AG04450 (cell line): ENCODE measurements at regions of chr13 and their contacts with region 1.

Region 1: GRCh38 chr13:26494571-26495195 is 62.8 kb upstream of the WASF3 start:
- DNase-seq: no peak
- H3K4me3 ChIP-seq: no peak overlapping the region
- H3K27ac ChIP-seq: no peak overlapping the region
- H3K27me3 ChIP-seq: peaks cover 14% of the 10 kb centered on the region
- CTCF ChIP-seq: no peak

Region 2: GRCh38 chr13:26221721-26222519 is 272.8 kb before region 1 on chr13 and contains the start of gene RNF6:
- CTCF ChIA-PET with region 1: interaction called, 10 read pairs
- POLR2A ChIA-PET with region 1: no interaction called
- DNase-seq: peak; percentile 98
- H3K4me3 ChIP-seq: peak within 1 kb of the TSS; percentile 86
- H3K27ac ChIP-seq: peak within 1 kb of the TSS; percentile 98
- H3K27me3 ChIP-seq: no peaks in the 10 kb centered on the region
- CTCF ChIP-seq: no peak
- polyA plus RNA-seq, gene RNF6: 30.5 and 42.5 TPM in 2 replicates

Region 3: DNA sequence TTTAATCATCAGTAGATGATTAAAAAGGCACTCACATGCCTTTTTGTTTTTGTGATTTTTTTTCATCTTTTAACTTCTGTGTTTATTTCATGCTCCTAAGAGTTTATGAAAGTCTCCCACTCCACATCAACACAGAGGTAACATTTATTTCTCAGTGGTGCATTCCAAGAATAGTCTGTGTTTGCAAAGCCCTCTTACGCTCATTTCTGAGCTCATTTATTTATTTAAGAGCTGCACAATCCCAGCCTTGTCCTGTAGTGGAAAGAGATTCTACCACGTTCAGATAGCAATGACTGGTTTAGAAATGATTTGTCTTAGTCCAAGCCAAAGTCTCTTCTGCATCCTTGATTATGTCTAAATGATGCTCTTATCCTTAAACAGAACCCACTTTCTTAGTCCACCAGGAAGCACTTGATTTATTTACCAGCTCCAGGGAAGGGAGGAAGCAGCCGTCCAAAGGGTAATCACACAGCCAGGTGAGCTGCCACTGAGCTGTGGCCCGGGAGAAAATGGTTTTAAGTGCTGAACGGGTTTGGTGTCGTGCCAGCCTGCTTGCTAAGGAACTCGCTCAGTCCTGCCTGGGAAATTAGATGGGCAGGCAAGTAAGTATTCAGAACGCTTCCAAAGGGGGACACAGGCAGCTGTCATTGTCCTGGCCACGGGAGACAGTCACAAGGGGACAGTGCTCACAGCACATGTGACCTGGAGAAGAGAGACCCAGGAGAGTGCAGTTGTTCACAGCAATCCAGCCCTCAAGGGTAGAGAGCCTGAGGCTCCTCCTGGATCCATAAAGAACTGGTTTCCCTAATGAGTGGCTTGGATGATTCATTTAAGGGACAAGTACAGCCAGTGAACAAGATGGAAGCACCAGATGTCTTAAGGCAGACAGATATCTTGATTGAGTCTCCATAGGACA is 69.0 kb before region 1 on chr13:
- CTCF ChIA-PET with region 1: interaction called, 19 read pairs
- POLR2A ChIA-PET with region 1: no interaction called
- DNase-seq: peak; percentile 37
- H3K4me3 ChIP-seq: no peak overlapping the region
- H3K27ac ChIP-seq: peak overlapping the region; percentile 34
- H3K27me3 ChIP-seq: no peaks in the 10 kb centered on the region
- CTCF ChIP-seq: no peak

Region 4: GRCh38 chr13:26482451-26483197 is 12.1 kb before region 1 on chr13:
- CTCF ChIA-PET with region 1: interaction called, 46 read pairs
- POLR2A ChIA-PET with region 1: no interaction called
- DNase-seq: no peak
- H3K4me3 ChIP-seq: no peak overlapping the region
- H3K27ac ChIP-seq: no peak overlapping the region
- H3K27me3 ChIP-seq: peaks cover 1% of the 10 kb centered on the region
- CTCF ChIP-seq: peak; percentile 96

Region 5: GRCh38 chr13:26548205-26548765 is 53.6 kb after region 1 on chr13:
- CTCF ChIA-PET with region 1: no interaction called
- POLR2A ChIA-PET with region 1: no interaction called
- DNase-seq: no peak
- H3K4me3 ChIP-seq: no peak overlapping the region
- H3K27ac ChIP-seq: no peak overlapping the region
- H3K27me3 ChIP-seq: peaks cover 16% of the 10 kb centered on the region
- CTCF ChIP-seq: no peak